B cell (primary cell): ENCODE measurements at regions of chr16 and their contacts with region 1.

Region 1: DNA sequence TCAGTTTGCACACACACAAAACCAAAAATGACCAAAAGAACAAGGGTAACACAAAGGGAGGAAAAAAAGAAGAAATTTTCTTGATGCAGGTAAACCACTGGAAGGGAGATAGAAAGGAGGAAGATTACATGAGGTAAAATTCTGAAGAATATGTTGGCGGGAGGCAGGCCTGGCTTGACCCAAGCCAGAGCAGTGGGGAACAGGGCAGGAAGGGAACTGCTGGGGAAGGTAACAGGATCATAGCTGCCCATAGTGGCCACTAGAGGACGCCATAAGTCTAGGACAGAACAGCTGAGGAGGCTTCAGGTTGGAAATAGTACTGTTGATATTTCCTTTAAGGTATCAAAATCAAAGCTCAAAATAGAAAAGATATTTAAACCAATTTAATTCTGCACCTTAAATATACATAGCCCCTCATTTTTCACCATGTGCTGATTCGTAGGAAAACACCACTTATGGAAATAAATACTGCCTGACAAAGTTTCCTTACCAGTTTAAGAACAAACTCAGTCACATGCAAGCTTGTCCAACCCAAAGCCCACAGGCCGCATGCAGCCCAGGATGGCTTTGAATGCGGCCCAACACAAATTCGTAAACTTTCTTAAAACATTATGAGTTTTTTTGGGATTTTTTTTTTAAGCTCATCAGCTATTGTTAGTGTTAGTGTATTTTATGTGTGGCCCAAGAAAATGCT is 15.5 kb downstream of the VPS35 start:
- DNase-seq: peak; percentile 78
- ATAC-seq: peak; percentile 92
- H3K4me3 ChIP-seq: no peak overlapping the region
- H3K4me3 Mint-ChIP-seq: no peak overlapping the region
- H3K27ac ChIP-seq: no peak overlapping the region
- H3K27ac Mint-ChIP-seq: no peak overlapping the region
- H3K4me1 ChIP-seq: no peaks in the 10 kb centered on the region
- H3K4me1 Mint-ChIP-seq: no peaks in the 10 kb centered on the region
- H3K27me3 ChIP-seq: no peaks in the 10 kb centered on the region
- H3K27me3 Mint-ChIP-seq: no peaks in the 10 kb centered on the region
- CTCF ChIP-seq: peak; percentile 97

Region 2: GRCh38 chr16:46658925-46659324 is 14.5 kb before region 1 on chr16:
- CTCF ChIA-PET with region 1: interaction called, 11 read pairs
- POLR2A ChIA-PET with region 1: no interaction called
- intact Hi-C with region 1: no loop called
- DNase-seq: peak; percentile 61
- ATAC-seq: peak; percentile 87
- H3K4me3 ChIP-seq: no peak overlapping the region
- H3K4me3 Mint-ChIP-seq: no peak overlapping the region
- H3K27ac ChIP-seq: peak overlapping the region; percentile 33 to 46
- H3K27ac Mint-ChIP-seq: peak overlapping the region; percentile 78
- H3K4me1 ChIP-seq: peaks cover 15 to 16% of the 10 kb centered on the region in 2 donors
- H3K4me1 Mint-ChIP-seq: peaks cover 23% of the 10 kb centered on the region
- H3K27me3 ChIP-seq: no peaks in the 10 kb centered on the region
- H3K27me3 Mint-ChIP-seq: no peaks in the 10 kb centered on the region
- CTCF ChIP-seq: no peak

Region 3: GRCh38 chr16:46801428-46802049 is 128.1 kb after region 1 on chr16:
- CTCF ChIA-PET with region 1: interaction called, 50 read pairs
- POLR2A ChIA-PET with region 1: no interaction called
- intact Hi-C with region 1: loop called (anchors 1 kb)
- DNase-seq: peak; percentile 30
- ATAC-seq: no peak
- H3K4me3 ChIP-seq: no peak overlapping the region
- H3K4me3 Mint-ChIP-seq: no peak overlapping the region
- H3K27ac ChIP-seq: no peak overlapping the region
- H3K27ac Mint-ChIP-seq: no peak overlapping the region
- H3K4me1 ChIP-seq: no peaks in the 10 kb centered on the region
- H3K4me1 Mint-ChIP-seq: peaks cover 4% of the 10 kb centered on the region
- H3K27me3 ChIP-seq: no peaks in the 10 kb centered on the region
- H3K27me3 Mint-ChIP-seq: no peaks in the 10 kb centered on the region
- CTCF ChIP-seq: peak; percentile 44

Region 4: DNA sequence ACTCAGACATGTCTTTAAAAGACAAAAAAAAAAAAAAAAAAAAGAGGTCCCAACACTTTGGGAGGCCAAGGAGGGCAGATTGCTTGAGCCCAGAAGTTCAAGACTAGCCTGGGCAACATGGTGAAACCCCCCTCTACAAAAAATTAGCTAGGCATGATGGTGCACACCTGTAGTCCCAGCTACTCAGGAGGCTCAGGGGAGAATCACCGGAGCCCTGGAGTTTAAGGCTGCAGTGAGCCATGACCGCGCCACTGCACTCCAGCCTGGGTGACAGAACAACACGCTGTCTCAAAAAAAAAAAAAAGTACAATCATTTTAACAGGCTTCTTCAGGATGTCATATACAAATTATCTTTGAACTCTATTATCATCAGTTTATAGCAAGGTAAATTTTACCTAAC is 135.5 kb after region 1 on chr16:
- CTCF ChIA-PET with region 1: interaction called, 10 read pairs
- POLR2A ChIA-PET with region 1: no interaction called
- intact Hi-C with region 1: no loop called
- DNase-seq: peak; percentile 54
- ATAC-seq: peak; percentile 75
- H3K4me3 ChIP-seq: peak overlapping the region in 1 of 5 experiments; percentile 25
- H3K4me3 Mint-ChIP-seq: no peak overlapping the region
- H3K27ac ChIP-seq: no peak overlapping the region
- H3K27ac Mint-ChIP-seq: no peak overlapping the region
- H3K4me1 ChIP-seq: peaks cover 17 to 20% of the 10 kb centered on the region in 2 donors
- H3K4me1 Mint-ChIP-seq: peaks cover 24% of the 10 kb centered on the region
- H3K27me3 ChIP-seq: no peaks in the 10 kb centered on the region
- H3K27me3 Mint-ChIP-seq: no peaks in the 10 kb centered on the region
- CTCF ChIP-seq: no peak

Region 5: GRCh38 chr16:46908540-46909372 is 235.3 kb after region 1 on chr16:
- CTCF ChIA-PET with region 1: interaction called, 63 read pairs
- POLR2A ChIA-PET with region 1: no interaction called
- intact Hi-C with region 1: loop called (anchors 1 kb)
- DNase-seq: peak; percentile 72
- ATAC-seq: peak; percentile 37
- H3K4me3 ChIP-seq: no peak overlapping the region
- H3K4me3 Mint-ChIP-seq: no peak overlapping the region
- H3K27ac ChIP-seq: no peak overlapping the region
- H3K27ac Mint-ChIP-seq: peak overlapping the region; percentile 74
- H3K4me1 ChIP-seq: peaks cover 40 to 63% of the 10 kb centered on the region in 2 donors
- H3K4me1 Mint-ChIP-seq: peaks cover 49% of the 10 kb centered on the region
- H3K27me3 ChIP-seq: no peaks in the 10 kb centered on the region
- H3K27me3 Mint-ChIP-seq: no peaks in the 10 kb centered on the region
- CTCF ChIP-seq: peak; percentile 85

Region 6: DNA sequence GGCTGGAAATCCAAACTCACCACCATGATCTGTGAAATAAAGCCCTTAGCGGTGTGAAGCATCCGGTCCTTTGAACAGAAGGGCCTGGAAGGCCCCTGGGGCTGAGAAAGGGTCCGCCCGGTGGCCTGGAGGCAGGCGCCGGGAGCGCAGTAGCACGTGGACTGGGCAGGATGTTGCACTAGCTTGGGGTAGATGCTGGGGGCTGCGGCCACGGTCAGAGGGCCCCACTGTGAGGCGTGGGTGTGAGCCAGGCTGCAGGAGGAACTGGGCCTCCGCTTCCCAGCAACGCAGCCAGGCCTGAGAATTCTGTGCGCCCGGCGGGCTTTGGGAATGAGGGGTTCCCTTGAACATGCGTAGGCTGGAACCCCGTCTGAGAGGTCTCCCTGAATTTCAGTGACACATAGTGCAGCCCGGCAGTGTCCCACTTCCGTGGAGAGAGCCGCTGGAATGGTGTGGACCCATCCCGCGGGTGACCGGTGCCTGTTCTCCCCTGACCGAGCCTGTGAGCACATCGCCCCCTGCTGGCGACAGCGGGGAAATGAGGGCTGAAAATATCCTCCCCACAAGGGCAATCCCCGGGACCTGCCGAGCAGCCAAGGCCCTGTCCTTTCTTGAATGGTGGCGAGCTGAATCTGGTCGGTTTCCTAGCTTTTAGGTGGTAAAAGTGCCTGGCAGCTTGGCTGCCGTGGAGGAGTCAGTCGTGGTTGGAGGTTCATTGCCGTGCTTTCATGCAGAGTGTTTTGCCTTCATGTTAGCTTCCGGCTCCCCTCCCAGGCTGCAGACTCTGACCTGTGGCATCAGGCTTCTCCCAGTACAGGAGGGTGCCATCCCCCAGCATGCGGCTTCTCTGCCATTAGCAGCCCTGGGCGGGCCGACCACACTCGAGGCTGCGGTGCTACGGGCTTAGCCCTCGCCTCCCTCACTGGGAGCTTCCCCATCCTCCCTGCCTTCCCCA is 256.2 kb after region 1 on chr16:
- CTCF ChIA-PET with region 1: interaction called, 22 read pairs
- POLR2A ChIA-PET with region 1: no interaction called
- intact Hi-C with region 1: loop called (anchors 1 kb)
- DNase-seq: peak; percentile 76
- ATAC-seq: peak; percentile 73
- H3K4me3 ChIP-seq: no peak overlapping the region
- H3K4me3 Mint-ChIP-seq: no peak overlapping the region
- H3K27ac ChIP-seq: no peak overlapping the region
- H3K27ac Mint-ChIP-seq: no peak overlapping the region
- H3K4me1 ChIP-seq: peaks cover 5 to 18% of the 10 kb centered on the region in 2 donors
- H3K4me1 Mint-ChIP-seq: peaks cover 7% of the 10 kb centered on the region
- H3K27me3 ChIP-seq: no peaks in the 10 kb centered on the region
- H3K27me3 Mint-ChIP-seq: no peaks in the 10 kb centered on the region
- CTCF ChIP-seq: peak; percentile 96